ENCODE measurements at regions of chr5 and their contacts with region 1.

Region 1: GRCh38 chr5:157718519-157718918 is 12.7 kb upstream of the THG1L start:
- DNase-seq: peak; percentile 19
- ATAC-seq: peak; percentile 94
- H3K4me3 ChIP-seq: no peak overlapping the region
- H3K27ac ChIP-seq: no peak overlapping the region
- H3K4me1 ChIP-seq: peaks cover 0 to 10% of the 10 kb centered on the region in 2 experiments; a peak in 2 of 4 replicates
- H3K27me3 ChIP-seq: no peaks in the 10 kb centered on the region
- CTCF ChIP-seq: peak; percentile 31 to 73 (median 63); a peak in 4 of 6 replicates
- POLR2A ChIP-seq: no peak
- RAD21 ChIP-seq: peak; percentile 93

Region 2: DNA sequence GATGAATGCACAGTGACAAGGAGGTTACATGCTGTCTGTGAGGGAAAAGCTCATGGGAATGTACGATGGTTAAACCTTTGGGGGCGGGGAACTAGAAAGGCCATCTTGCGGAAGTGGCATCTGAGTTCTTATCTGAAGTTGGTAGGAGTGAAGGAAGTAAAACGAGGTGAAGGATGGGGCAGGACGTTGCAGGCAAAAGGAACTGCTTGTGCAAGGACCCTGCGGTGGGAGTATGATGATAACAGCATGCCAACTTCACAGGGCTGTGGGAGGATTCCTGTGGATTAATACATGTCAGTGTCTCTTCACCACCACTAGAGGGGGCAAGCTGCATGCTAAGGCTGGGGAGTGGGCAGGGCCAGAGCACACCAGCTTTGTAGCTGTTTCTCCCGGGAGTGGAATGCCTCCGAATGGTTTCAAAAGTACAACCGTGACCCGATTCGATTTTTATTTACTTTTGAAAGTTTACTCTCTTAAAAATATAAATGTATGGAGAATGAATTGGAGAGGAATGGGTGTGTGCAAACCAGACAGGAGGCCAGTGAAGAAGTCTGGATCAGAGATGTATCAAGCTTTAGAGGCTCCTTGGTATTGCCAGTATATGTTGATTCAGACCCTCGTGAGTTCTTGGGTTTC is 390.1 kb before region 1 on chr5:
- CTCF ChIA-PET with region 1: interaction called, 9 read pairs
- POLR2A ChIA-PET with region 1: no interaction called
- RAD21 ChIA-PET with region 1: interaction called in 1 of 2 experiments, 3 read pairs
- intact Hi-C with region 1: loop called (anchors 1 kb)
- DNase-seq: peak; percentile 58
- ATAC-seq: peak; percentile 98
- H3K4me3 ChIP-seq: 0 out of 4 replicates have a peak overlapping the region, but pooled peaks of 1 of the 2 experiments have one; percentile 12
- H3K27ac ChIP-seq: no peak overlapping the region
- H3K4me1 ChIP-seq: peaks cover 0 to 4% of the 10 kb centered on the region in 2 experiments; a peak in 1 of 4 replicates
- H3K27me3 ChIP-seq: no peaks in the 10 kb centered on the region
- CTCF ChIP-seq: peak; percentile 92 to 95 (median 92)
- POLR2A ChIP-seq: no peak
- RAD21 ChIP-seq: peak; percentile 91

Region 3: DNA sequence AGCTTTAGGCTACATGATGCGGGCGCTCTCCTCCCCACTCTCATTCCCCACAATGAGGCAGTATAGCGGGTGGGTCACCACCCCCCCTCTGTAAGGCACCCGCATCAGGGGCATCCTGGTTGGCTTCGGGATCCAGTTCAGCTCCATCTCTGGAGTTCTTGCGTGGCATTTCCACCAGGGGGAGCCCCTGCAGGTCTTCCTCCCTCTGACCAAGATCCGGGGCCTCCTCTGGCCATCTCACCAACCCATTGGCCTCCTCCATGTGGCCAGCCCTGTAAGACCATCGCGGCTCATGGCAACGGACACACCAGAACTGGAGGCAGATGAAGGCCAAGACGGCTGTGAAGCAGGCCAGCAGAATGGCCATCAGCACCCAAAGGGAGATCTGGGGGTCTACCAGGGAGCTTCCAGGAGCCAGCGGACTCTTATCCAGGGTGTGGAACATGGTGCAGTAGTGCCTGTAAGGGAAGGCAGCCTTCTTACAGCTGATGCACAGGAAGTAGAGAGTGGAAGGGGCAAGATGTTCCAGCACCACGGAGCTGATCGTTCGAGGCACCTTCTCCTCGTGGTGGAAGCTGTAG is 375.6 kb before region 1 on chr5:
- CTCF ChIA-PET with region 1: interaction called, 7 read pairs
- POLR2A ChIA-PET with region 1: no interaction called
- RAD21 ChIA-PET with region 1: no interaction called
- intact Hi-C with region 1: loop called (anchors 1 kb)
- DNase-seq: peak; percentile 23
- ATAC-seq: peak; percentile 96
- H3K4me3 ChIP-seq: no peak overlapping the region
- H3K27ac ChIP-seq: no peak overlapping the region
- H3K4me1 ChIP-seq: no peaks in the 10 kb centered on the region
- H3K27me3 ChIP-seq: no peaks in the 10 kb centered on the region
- CTCF ChIP-seq: peak; percentile 66 to 85 (median 80); a peak in 5 of 6 replicates
- POLR2A ChIP-seq: no peak
- RAD21 ChIP-seq: peak; percentile 64

Region 4: GRCh38 chr5:157366741-157367674 is 351.5 kb before region 1 on chr5:
- CTCF ChIA-PET with region 1: no interaction called
- POLR2A ChIA-PET with region 1: no interaction called
- RAD21 ChIA-PET with region 1: no interaction called
- intact Hi-C with region 1: loop called (anchors 5 kb)
- DNase-seq: no peak
- ATAC-seq: peak; percentile 85
- H3K4me3 ChIP-seq: no peak overlapping the region
- H3K27ac ChIP-seq: no peak overlapping the region
- H3K4me1 ChIP-seq: no peaks in the 10 kb centered on the region
- H3K27me3 ChIP-seq: no peaks in the 10 kb centered on the region
- CTCF ChIP-seq: peak; percentile 62 to 82 (median 71)
- POLR2A ChIP-seq: no peak
- RAD21 ChIP-seq: peak; percentile 93

Region 5: GRCh38 chr5:157431544-157432200 is 286.8 kb before region 1 on chr5:
- CTCF ChIA-PET with region 1: interaction called, 4 read pairs
- POLR2A ChIA-PET with region 1: no interaction called
- RAD21 ChIA-PET with region 1: no interaction called
- intact Hi-C with region 1: loop called (anchors 5 kb)
- DNase-seq: peak; percentile 38
- ATAC-seq: peak; percentile 98
- H3K4me3 ChIP-seq: no peak overlapping the region
- H3K27ac ChIP-seq: no peak overlapping the region
- H3K4me1 ChIP-seq: peaks cover 0 to 7% of the 10 kb centered on the region in 2 experiments; a peak in 2 of 4 replicates
- H3K27me3 ChIP-seq: no peaks in the 10 kb centered on the region
- CTCF ChIP-seq: peak; percentile 39 to 85 (median 60); a peak in 4 of 6 replicates
- POLR2A ChIP-seq: no peak
- RAD21 ChIP-seq: peak; percentile 84

Region 6: GRCh38 chr5:157669701-157670097 is 48.8 kb before region 1 on chr5:
- CTCF ChIA-PET with region 1: interaction called, 7 read pairs
- POLR2A ChIA-PET with region 1: no interaction called
- RAD21 ChIA-PET with region 1: interaction called in 1 of 2 experiments, 4 read pairs
- intact Hi-C with region 1: loop called (anchors 1 kb)
- DNase-seq: no peak
- ATAC-seq: no peak
- H3K4me3 ChIP-seq: no peak overlapping the region
- H3K27ac ChIP-seq: no peak overlapping the region
- H3K4me1 ChIP-seq: peaks cover 0 to 9% of the 10 kb centered on the region in 2 experiments; a peak in 2 of 4 replicates
- H3K27me3 ChIP-seq: no peaks in the 10 kb centered on the region
- CTCF ChIP-seq: no peak
- POLR2A ChIP-seq: no peak
- RAD21 ChIP-seq: no peak

Region 7: DNA sequence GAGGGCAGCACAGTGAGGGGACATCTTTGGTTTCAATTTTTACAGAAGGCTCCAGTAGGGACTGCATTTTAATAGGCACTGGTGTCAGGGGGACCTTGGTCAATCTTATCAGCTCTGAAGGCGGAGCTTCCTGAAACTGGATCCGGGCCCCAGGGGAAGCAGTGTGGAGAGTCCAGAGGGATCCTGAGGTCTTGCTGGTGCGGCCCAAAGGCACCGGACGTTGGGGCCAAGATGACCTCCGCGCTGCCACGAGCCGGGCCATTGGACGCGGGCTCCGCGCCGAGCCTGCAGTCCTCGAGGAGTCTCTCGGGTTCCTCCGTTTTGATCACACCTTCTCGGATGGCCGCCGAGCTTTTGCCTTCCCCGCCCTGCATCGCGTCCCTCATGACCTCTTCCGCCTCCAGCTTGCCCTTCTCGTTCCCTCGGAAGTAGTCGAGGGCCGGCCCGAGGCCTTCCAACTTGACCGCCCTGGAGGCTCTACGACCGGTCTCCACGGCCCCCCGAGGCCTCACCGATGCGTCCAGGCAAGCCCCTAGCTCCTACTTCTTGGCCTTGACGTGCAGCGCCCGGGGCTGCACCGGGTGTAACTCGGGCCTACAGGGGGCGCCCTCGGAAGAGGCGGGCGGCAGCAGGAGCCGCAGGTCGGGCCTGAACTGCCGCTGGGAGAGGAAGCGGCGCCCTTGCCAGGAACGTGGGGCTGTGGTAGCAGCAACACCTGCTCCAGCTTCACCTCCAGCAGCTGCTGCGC is 28.4 kb before region 1 on chr5:
- CTCF ChIA-PET with region 1: no interaction called
- POLR2A ChIA-PET with region 1: no interaction called
- RAD21 ChIA-PET with region 1: no interaction called
- intact Hi-C with region 1: no loop called
- DNase-seq: no peak
- ATAC-seq: peak; percentile 40
- H3K4me3 ChIP-seq: no peak overlapping the region
- H3K27ac ChIP-seq: no peak overlapping the region
- H3K4me1 ChIP-seq: no peaks in the 10 kb centered on the region
- H3K27me3 ChIP-seq: no peaks in the 10 kb centered on the region
- CTCF ChIP-seq: peak in 1 of 3 experiments; percentile 24; a peak in 2 of 6 replicates
- POLR2A ChIP-seq: no peak
- RAD21 ChIP-seq: no peak